GM12878 (cell line): ENCODE measurements at regions of chr3 and their contacts with region 1.

Region 1: GRCh38 chr3:47324278-47324865 is 41.6 kb downstream of the KLHL18 start:
- DNase-seq: peak; percentile 24
- ATAC-seq: peak; percentile 89
- H3K4me3 ChIP-seq: no peak overlapping the region
- H3K27ac ChIP-seq: no peak overlapping the region
- H3K4me1 ChIP-seq: no peaks in the 10 kb centered on the region
- H3K27me3 ChIP-seq: no peaks in the 10 kb centered on the region
- CTCF ChIP-seq: peak; percentile 70 to 84 (median 73)
- EP300 ChIP-seq: no peak
- POLR2A ChIP-seq: no peak
- RAD21 ChIP-seq: peak; percentile 93

Region 2: GRCh38 chr3:47082519-47082918 is 241.9 kb before region 1 on chr3:
- CTCF ChIA-PET with region 1: no interaction called
- POLR2A ChIA-PET with region 1: no interaction called
- RAD21 ChIA-PET with region 1: interaction called, 10 read pairs
- SMC1A ChIA-PET with region 1: interaction called, 10 read pairs
- in situ Hi-C with region 1: no loop called
- intact Hi-C with region 1: loop called (anchors 10 kb)
- DNase-seq: peak; percentile 51
- ATAC-seq: peak; percentile 95
- H3K4me3 ChIP-seq: no peak overlapping the region
- H3K27ac ChIP-seq: 0 out of 2 replicates have a peak overlapping the region, but pooled peaks have one; percentile 4
- H3K4me1 ChIP-seq: peaks cover 18% of the 10 kb centered on the region
- H3K27me3 ChIP-seq: no peaks in the 10 kb centered on the region
- CTCF ChIP-seq: no peak
- EP300 ChIP-seq: no peak
- POLR2A ChIP-seq: no peak
- RAD21 ChIP-seq: no peak

Region 3: GRCh38 chr3:47274652-47275051 is 49.7 kb before region 1 on chr3:
- CTCF ChIA-PET with region 1: interaction called, 15 read pairs
- POLR2A ChIA-PET with region 1: interaction called, 4 read pairs
- RAD21 ChIA-PET with region 1: interaction called, 5 read pairs
- SMC1A ChIA-PET with region 1: interaction called, 8 read pairs
- in situ Hi-C with region 1: no loop called
- intact Hi-C with region 1: no loop called
- DNase-seq: no peak
- ATAC-seq: no peak
- H3K4me3 ChIP-seq: no peak overlapping the region
- H3K27ac ChIP-seq: no peak overlapping the region
- H3K4me1 ChIP-seq: no peaks in the 10 kb centered on the region
- H3K27me3 ChIP-seq: no peaks in the 10 kb centered on the region
- CTCF ChIP-seq: 0 out of 6 replicates have a peak, but pooled peaks of 1 of the 3 experiments have one; percentile 7
- EP300 ChIP-seq: no peak
- POLR2A ChIP-seq: no peak
- RAD21 ChIP-seq: 0 out of 2 replicates have a peak, but pooled peaks have one; percentile 9

Region 4: DNA sequence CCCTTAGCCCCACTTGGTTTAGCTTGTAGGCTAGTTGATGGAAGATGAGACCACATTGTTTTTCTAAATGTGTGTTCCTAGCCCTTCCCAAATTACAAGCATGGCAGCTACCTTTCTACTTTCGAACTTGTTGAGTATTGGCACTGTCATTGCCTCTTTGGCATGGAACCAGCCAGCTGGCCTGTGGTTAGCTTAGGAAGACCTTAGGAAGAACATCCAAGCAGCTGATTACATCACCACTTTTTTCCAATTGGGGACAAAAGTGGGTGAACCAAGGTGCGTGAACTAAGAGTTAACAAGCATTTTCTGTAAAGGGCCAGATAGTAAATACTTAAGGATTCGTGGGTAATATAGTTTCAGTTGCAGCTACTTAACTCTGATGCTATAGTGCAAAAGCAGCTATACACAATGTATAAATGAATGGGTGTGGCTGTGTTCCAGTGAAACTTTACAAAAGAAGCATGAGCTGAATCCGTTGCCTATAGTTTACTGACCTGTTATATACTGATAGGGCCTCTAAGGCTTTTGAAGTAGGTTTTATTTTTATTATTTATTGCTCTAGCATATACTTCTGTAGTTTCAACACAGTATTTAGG is 33.1 kb before region 1 on chr3:
- CTCF ChIA-PET with region 1: interaction called, 13 read pairs
- POLR2A ChIA-PET with region 1: interaction called, 4 read pairs
- RAD21 ChIA-PET with region 1: interaction called, 5 read pairs
- SMC1A ChIA-PET with region 1: interaction called, 15 read pairs
- in situ Hi-C with region 1: no loop called
- intact Hi-C with region 1: no loop called
- DNase-seq: no peak
- ATAC-seq: peak; percentile 50
- H3K4me3 ChIP-seq: no peak overlapping the region
- H3K27ac ChIP-seq: peak overlapping the region; percentile 61
- H3K4me1 ChIP-seq: peaks cover 40% of the 10 kb centered on the region
- H3K27me3 ChIP-seq: no peaks in the 10 kb centered on the region
- CTCF ChIP-seq: no peak
- EP300 ChIP-seq: no peak
- POLR2A ChIP-seq: no peak
- RAD21 ChIP-seq: no peak

Region 5: GRCh38 chr3:47347217-47347801 is 22.9 kb after region 1 on chr3:
- CTCF ChIA-PET with region 1: interaction called, 10 read pairs
- POLR2A ChIA-PET with region 1: interaction called, 3 read pairs
- RAD21 ChIA-PET with region 1: no interaction called
- SMC1A ChIA-PET with region 1: interaction called, 4 read pairs
- in situ Hi-C with region 1: no loop called
- intact Hi-C with region 1: no loop called
- DNase-seq: peak; percentile 82
- ATAC-seq: peak; percentile 92
- H3K4me3 ChIP-seq: 0 out of 2 replicates have a peak overlapping the region, but pooled peaks have one; percentile 25
- H3K27ac ChIP-seq: peak overlapping the region; percentile 56
- H3K4me1 ChIP-seq: peaks cover 22% of the 10 kb centered on the region
- H3K27me3 ChIP-seq: no peaks in the 10 kb centered on the region
- CTCF ChIP-seq: no peak
- EP300 ChIP-seq: peak; percentile 76 to 91
- POLR2A ChIP-seq: no peak
- RAD21 ChIP-seq: no peak